Mammary epithelial cell (primary cell): ENCODE measurements at regions of chr17 and their contacts with region 1.

Region 1: DNA sequence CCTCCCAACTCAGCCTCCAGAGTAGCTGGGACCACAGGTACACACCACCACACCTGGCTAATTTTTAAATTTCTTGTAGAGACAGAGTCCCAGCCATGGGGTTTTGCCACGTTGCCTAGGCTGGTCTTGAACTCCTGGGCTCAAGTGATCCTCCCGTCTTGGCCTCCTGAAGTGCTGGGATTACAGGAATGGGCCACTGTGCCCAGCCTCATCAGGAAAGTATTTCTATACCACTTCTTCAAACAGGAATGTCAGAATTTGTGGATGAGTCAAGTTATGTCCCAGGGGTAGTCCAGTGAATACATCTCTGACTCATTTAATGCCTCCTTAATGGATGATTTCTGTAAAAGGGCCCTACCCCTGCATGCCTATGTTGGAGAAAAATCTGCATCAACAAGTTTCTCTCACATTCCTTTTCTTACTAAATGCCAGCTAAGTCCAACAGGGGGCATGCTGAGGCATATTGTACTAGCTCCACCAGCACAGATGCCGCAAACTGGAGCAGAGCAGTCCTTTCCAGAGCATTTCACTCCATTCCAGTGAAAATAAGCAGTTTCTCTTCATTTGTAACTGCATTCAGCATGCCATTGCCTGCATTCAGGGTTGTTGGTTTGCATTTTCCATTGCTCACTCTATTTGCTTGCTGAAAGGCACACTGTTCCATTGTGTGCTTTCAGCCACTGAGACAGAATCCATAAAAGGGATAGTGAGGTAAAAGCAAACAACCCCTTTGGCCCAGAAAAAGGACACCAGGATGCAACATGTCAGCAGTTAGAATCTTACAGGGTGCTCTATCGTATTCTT is 5.3 kb upstream of the CAVIN1 start:
- DNase-seq: peak; percentile 98
- H3K4me3 ChIP-seq: peak overlapping the region in 1 of 3 experiments; percentile 22
- H3K27ac ChIP-seq: peak overlapping the region; percentile 64
- H3K4me1 ChIP-seq: peaks cover 11% of the 10 kb centered on the region
- H3K27me3 ChIP-seq: no peaks in the 10 kb centered on the region
- CTCF ChIP-seq: peak; percentile 85 to 95

Region 2: GRCh38 chr17:42276359-42276608 is 152.1 kb before region 1 on chr17 and contains the start of gene STAT5B:
- CTCF ChIA-PET with region 1: no interaction called
- dilution Hi-C with region 1: no loop called
- in situ Hi-C with region 1: no loop called
- intact Hi-C with region 1: no loop called
- DNase-seq: peak; percentile 61
- H3K4me3 ChIP-seq: peak within 1 kb of the TSS; percentile 77 to 91 (median 78)
- H3K27ac ChIP-seq: no peak within 1 kb of the TSS
- H3K4me1 ChIP-seq: peaks cover 15% of the 10 kb centered on the region
- H3K27me3 ChIP-seq: no peaks in the 10 kb centered on the region
- CTCF ChIP-seq: no peak
- total RNA-seq, gene STAT5B: 20.0 to 20.5 TPM

Region 3: DNA sequence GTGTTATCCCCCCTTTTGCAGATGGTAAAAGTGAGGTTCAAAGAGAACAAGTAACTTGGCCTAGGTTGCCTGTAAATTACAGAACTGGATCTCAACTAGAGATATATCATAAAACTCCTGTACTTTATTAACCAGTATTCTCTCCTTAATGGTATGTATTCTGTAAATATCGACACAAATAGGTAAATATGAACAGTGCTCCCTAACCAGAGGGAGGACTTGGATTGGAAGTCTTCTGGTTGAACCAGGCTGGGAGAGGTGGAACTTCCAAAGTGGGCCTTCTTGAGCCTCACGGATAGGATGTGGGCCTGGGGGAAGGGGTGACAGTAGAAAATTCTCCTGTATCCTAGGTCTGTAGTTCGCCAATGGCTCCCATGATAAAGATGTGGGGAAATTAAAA is 132.3 kb before region 1 on chr17:
- CTCF ChIA-PET with region 1: no interaction called
- dilution Hi-C with region 1: no loop called
- in situ Hi-C with region 1: no loop called
- intact Hi-C with region 1: no loop called
- DNase-seq: no peak
- H3K4me3 ChIP-seq: no peak overlapping the region
- H3K27ac ChIP-seq: no peak overlapping the region
- H3K4me1 ChIP-seq: no peaks in the 10 kb centered on the region
- H3K27me3 ChIP-seq: no peaks in the 10 kb centered on the region
- CTCF ChIP-seq: no peak

Region 4: DNA sequence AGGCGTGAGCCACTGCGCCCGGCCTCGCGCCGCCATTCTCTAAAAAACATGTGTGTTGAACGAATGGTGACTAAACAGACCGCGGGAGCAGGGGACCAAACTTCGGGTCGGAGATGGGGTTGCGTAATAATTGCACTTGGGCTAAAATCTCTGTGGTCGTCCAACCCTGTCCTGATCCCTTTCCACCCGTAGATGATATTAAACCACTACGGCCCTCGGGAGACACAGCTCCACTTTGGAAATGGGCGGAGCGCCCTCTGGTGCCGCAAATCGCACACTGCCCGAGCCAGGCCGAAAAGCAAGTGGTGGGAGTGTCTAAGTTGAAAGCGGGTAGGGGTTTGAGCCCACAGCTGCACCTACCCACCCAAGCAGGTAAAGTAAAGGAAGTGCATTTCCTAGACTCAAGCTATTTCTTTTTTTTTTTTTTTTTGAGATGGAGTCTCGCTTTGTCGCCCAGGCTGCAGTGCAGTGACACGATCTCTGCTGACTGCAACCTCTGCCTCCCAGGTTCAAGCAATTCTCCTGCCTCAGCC is 22.3 kb before region 1 on chr17:
- CTCF ChIA-PET with region 1: interaction called, 9 read pairs
- dilution Hi-C with region 1: no loop called
- in situ Hi-C with region 1: no loop called
- intact Hi-C with region 1: loop called (anchors 1 kb)
- DNase-seq: peak; percentile 26
- H3K4me3 ChIP-seq: no peak overlapping the region
- H3K27ac ChIP-seq: no peak overlapping the region
- H3K4me1 ChIP-seq: peaks cover 50% of the 10 kb centered on the region
- H3K27me3 ChIP-seq: no peaks in the 10 kb centered on the region
- CTCF ChIP-seq: peak; percentile 45 to 76

Region 5: GRCh38 chr17:42459256-42459800 is 31.0 kb after region 1 on chr17:
- CTCF ChIA-PET with region 1: no interaction called
- dilution Hi-C with region 1: no loop called
- in situ Hi-C with region 1: no loop called
- intact Hi-C with region 1: loop called (anchors 1 kb)
- DNase-seq: peak; percentile 63
- H3K4me3 ChIP-seq: peak overlapping the region; percentile 73 to 97 (median 77)
- H3K27ac ChIP-seq: peak overlapping the region; percentile 68
- H3K4me1 ChIP-seq: peaks cover 41% of the 10 kb centered on the region
- H3K27me3 ChIP-seq: no peaks in the 10 kb centered on the region
- CTCF ChIP-seq: peak in 1 of 2 donors; percentile 51

Region 6: GRCh38 chr17:42536372-42537155 is 108.2 kb after region 1 on chr17:
- CTCF ChIA-PET with region 1: no interaction called
- dilution Hi-C with region 1: no loop called
- in situ Hi-C with region 1: no loop called
- intact Hi-C with region 1: no loop called
- DNase-seq: peak; percentile 70
- H3K4me3 ChIP-seq: peak overlapping the region; percentile 63 to 78 (median 70)
- H3K27ac ChIP-seq: peak overlapping the region; percentile 26
- H3K4me1 ChIP-seq: peaks cover 22% of the 10 kb centered on the region
- H3K27me3 ChIP-seq: no peaks in the 10 kb centered on the region
- CTCF ChIP-seq: no peak

Region 7: DNA sequence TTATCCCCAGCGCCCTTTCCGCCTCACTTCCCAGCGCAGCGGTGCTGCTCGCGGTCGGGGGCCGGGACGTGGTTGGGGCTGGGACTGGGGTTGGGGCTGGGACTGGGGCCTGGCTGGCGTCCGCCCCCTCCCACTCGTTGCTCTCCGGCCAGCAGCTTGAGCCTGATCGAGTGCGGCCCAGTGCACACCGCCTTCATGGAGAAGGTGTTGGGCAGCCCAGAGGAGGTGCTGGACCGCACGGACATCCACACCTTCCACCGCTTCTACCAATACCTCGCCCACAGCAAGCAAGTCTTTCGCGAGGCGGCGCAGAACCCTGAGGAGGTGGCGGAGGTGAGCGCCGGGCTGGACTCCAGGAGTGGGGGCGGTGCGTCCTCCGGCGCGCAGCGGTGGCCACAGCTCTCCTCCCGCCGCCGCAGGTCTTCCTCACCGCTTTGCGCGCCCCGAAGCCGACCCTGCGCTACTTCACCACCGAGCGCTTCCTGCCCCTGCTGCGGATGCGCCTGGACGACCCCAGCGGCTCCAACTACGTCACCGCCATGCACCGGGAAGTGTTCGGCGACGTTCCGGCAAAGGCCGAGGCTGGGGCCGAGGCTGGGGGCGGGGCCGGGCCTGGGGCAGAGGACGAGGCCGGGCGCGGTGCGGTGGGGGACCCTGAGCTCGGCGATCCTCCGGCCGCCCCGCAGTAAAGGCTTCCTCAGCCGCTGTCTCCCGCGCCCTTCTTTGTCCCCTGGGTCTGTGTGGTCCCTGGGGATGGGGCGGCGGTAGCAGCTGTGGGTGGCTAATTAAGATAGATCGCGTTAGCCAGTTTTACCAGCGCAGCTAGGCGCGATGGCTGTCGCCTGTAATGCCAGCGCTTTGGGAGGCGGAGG is 126.1 kb after region 1 on chr17:
- CTCF ChIA-PET with region 1: no interaction called
- dilution Hi-C with region 1: no loop called
- in situ Hi-C with region 1: no loop called
- intact Hi-C with region 1: no loop called
- DNase-seq: peak; percentile 65
- H3K4me3 ChIP-seq: peak overlapping the region; percentile 81 to 89 (median 89)
- H3K27ac ChIP-seq: peak overlapping the region; percentile 30
- H3K4me1 ChIP-seq: peaks cover 15% of the 10 kb centered on the region
- H3K27me3 ChIP-seq: no peaks in the 10 kb centered on the region
- CTCF ChIP-seq: no peak